ENCODE measurements at regions of chr4 and their contacts with region 1.

Region 1: GRCh38 chr4:139099366-139099982 is 77.5 kb downstream of the ELF2 start:
- DNase-seq: peak; percentile 50 to 90 (median 66)
- ATAC-seq: peak; percentile 88
- H3K4me3 ChIP-seq: no peak overlapping the region
- H3K4me3 Mint-ChIP-seq: no peak overlapping the region
- H3K27ac ChIP-seq: no peak overlapping the region
- H3K27ac Mint-ChIP-seq: no peak overlapping the region
- H3K4me1 ChIP-seq: no peaks in the 10 kb centered on the region
- H3K4me1 Mint-ChIP-seq: peaks cover 5% of the 10 kb centered on the region
- H3K27me3 ChIP-seq: no peaks in the 10 kb centered on the region
- H3K27me3 Mint-ChIP-seq: no peaks in the 10 kb centered on the region
- CTCF ChIP-seq: peak; percentile 89

Region 2: GRCh38 chr4:139083956-139084803 is 15.3 kb before region 1 on chr4:
- CTCF ChIA-PET with region 1: interaction called, 13 read pairs
- POLR2A ChIA-PET with region 1: no interaction called
- intact Hi-C with region 1: no loop called
- DNase-seq: peak; percentile 65 to 94 (median 80)
- ATAC-seq: peak; percentile 44
- H3K4me3 ChIP-seq: peak overlapping the region; percentile 93
- H3K4me3 Mint-ChIP-seq: peak overlapping the region; percentile 93
- H3K27ac ChIP-seq: peak overlapping the region; percentile 94 to 96
- H3K27ac Mint-ChIP-seq: peak overlapping the region; percentile 92
- H3K4me1 ChIP-seq: peaks cover 5% of the 10 kb centered on the region
- H3K4me1 Mint-ChIP-seq: peaks cover 55% of the 10 kb centered on the region
- H3K27me3 ChIP-seq: no peaks in the 10 kb centered on the region
- H3K27me3 Mint-ChIP-seq: no peaks in the 10 kb centered on the region
- CTCF ChIP-seq: no peak

Region 3: GRCh38 chr4:139177868-139178611 is 78.6 kb after region 1 on chr4:
- CTCF ChIA-PET with region 1: interaction called, 3 read pairs
- POLR2A ChIA-PET with region 1: interaction called, 3 read pairs
- intact Hi-C with region 1: loop called (anchors 5 kb)
- DNase-seq: peak; percentile 80 to 96 (median 90)
- ATAC-seq: peak; percentile 74
- H3K4me3 ChIP-seq: peak overlapping the region; percentile 85
- H3K4me3 Mint-ChIP-seq: peak overlapping the region; percentile 96
- H3K27ac ChIP-seq: peak overlapping the region; percentile 77 to 88
- H3K27ac Mint-ChIP-seq: peak overlapping the region; percentile 93
- H3K4me1 ChIP-seq: peaks cover 18% of the 10 kb centered on the region
- H3K4me1 Mint-ChIP-seq: peaks cover 26% of the 10 kb centered on the region
- H3K27me3 ChIP-seq: no peaks in the 10 kb centered on the region
- H3K27me3 Mint-ChIP-seq: no peaks in the 10 kb centered on the region
- CTCF ChIP-seq: no peak

Region 4: DNA sequence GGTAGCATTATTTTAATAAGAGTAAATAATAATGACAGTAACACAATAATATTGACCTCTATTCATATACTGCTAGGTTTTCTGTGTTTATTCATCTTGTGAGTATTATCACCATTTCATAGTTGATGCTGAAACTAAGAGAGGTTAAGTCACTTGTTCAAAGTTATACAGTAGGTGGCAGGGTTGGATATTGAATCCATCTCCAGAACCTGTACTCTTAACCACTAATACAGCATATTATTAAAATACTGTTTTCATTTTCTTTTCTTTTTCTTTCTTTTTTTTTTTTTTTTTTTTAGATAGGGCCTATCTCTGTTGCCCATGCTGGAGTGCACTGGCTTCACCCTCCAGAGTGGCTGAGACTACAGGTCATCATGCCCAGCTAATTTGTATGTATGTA is 84.7 kb after region 1 on chr4:
- CTCF ChIA-PET with region 1: no interaction called
- POLR2A ChIA-PET with region 1: no interaction called
- intact Hi-C with region 1: loop called (anchors 5 kb)
- DNase-seq: peak in 3 of 14 experiments; percentile 11 to 20 (median 17)
- ATAC-seq: no peak
- H3K4me3 ChIP-seq: no peak overlapping the region
- H3K4me3 Mint-ChIP-seq: no peak overlapping the region
- H3K27ac ChIP-seq: no peak overlapping the region
- H3K27ac Mint-ChIP-seq: no peak overlapping the region
- H3K4me1 ChIP-seq: peaks cover under 1% of the 10 kb centered on the region
- H3K4me1 Mint-ChIP-seq: no peaks in the 10 kb centered on the region
- H3K27me3 ChIP-seq: peaks cover 0 to 3% of the 10 kb centered on the region in 2 experiments
- H3K27me3 Mint-ChIP-seq: no peaks in the 10 kb centered on the region
- CTCF ChIP-seq: no peak

Region 5: DNA sequence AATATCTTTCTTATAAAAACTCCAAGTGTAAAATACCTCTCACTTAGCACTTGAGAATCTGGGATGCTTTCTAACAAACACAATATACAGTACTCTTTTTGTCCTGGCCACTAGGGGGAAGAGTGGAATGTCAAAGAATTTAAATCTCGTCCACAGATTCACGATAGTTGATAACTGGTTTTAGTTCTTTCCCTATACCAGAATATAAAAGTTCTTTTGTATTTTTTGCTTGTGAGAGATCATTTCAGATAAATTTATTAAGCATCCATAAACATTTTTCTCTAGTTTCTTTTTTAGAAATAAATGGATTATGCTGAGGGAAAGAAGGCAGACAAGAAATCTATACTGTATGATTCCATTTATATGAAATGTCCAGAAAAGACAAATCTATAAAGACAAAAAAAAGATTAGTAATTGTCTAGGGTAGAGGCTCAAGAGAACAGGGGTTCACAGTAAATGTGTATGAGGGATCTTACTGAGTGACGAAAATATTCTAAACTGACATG is 130.1 kb after region 1 on chr4:
- CTCF ChIA-PET with region 1: interaction called, 5 read pairs
- POLR2A ChIA-PET with region 1: interaction called, 3 read pairs
- intact Hi-C with region 1: loop called (anchors 1 to 2 kb)
- DNase-seq: peak in 4 of 14 experiments; percentile 17 to 71 (median 67)
- ATAC-seq: peak; percentile 71
- H3K4me3 ChIP-seq: no peak overlapping the region
- H3K4me3 Mint-ChIP-seq: no peak overlapping the region
- H3K27ac ChIP-seq: no peak overlapping the region
- H3K27ac Mint-ChIP-seq: no peak overlapping the region
- H3K4me1 ChIP-seq: no peaks in the 10 kb centered on the region
- H3K4me1 Mint-ChIP-seq: no peaks in the 10 kb centered on the region
- H3K27me3 ChIP-seq: no peaks in the 10 kb centered on the region
- H3K27me3 Mint-ChIP-seq: no peaks in the 10 kb centered on the region
- CTCF ChIP-seq: peak; percentile 82

Region 6: DNA sequence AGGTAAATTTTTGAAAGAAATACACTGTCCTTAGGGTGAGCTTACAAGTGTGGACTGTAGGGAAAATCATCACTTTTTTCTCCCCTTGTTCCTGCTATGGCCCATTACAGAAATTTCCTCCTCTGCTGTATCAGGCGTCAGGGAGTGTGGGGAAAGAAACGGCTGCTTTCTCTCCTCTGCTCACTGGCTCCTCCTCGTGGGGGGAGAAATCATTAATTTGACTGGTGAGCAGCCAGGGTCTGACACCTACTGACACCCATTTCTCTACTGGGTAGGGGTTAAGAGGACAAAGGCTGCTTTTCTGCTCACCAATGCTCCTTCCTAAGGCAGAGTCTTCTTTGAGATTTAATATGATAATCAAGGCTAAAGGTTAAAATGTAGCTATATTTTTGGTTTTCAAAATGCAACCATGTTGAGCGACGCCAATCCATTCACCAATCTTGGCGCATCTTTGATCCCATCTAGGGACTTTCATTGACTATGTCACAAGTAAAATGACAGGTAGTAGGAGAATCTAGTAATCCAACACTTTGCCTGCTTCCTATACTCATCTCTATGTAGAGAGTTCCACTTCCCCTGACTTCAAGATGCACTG is 431.5 kb after region 1 on chr4:
- CTCF ChIA-PET with region 1: no interaction called
- POLR2A ChIA-PET with region 1: no interaction called
- intact Hi-C with region 1: loop called in 1 of 2 experiments (anchors 10 kb)
- DNase-seq: peak; percentile 40 to 75 (median 53)
- ATAC-seq: peak; percentile 84
- H3K4me3 ChIP-seq: no peak overlapping the region
- H3K4me3 Mint-ChIP-seq: no peak overlapping the region
- H3K27ac ChIP-seq: no peak overlapping the region
- H3K27ac Mint-ChIP-seq: no peak overlapping the region
- H3K4me1 ChIP-seq: peaks cover 9% of the 10 kb centered on the region
- H3K4me1 Mint-ChIP-seq: peaks cover 5% of the 10 kb centered on the region
- H3K27me3 ChIP-seq: no peaks in the 10 kb centered on the region
- H3K27me3 Mint-ChIP-seq: no peaks in the 10 kb centered on the region
- CTCF ChIP-seq: peak; percentile 76

Region 7: DNA sequence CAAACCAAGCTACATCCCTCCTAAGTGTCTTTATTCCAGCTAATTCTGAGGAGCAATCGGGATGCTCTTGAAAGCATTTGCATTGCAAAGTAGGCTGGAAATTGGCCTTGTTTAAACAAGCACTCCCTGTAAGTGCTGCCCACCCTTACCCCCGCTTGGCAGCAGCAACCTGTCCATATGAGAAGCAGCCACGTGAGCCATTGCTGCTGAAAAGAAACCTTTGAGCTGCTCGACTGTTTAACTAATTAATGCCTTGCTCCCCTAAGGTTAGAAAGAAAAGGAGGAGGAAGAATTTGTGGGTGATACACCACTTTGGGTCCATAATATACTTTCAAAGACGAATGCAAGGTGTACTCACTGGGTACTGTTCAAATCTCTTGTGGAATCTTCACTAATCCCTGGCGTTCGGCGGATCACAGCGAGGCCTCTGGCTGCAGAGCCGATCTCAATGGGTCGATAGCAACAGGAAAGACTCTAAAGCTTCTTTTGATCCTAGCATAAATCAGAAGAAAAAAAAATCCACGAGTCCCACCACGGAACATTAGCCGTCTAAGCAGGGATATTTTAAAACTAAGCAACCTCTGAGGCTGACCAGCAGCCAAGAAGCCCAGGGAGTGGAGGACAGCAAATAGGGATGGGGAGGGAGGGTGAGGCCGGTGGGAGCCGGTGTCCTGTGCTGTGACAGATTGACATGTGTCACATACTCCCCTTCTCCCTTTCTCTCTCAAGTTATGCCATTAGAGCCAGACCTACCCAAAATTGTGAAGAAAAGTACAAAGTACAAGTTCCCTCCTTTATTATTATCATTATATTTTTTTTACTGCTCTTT is 528.9 kb after region 1 on chr4:
- CTCF ChIA-PET with region 1: no interaction called
- POLR2A ChIA-PET with region 1: no interaction called
- intact Hi-C with region 1: no loop called
- DNase-seq: no peak
- ATAC-seq: no peak
- H3K4me3 ChIP-seq: no peak overlapping the region
- H3K4me3 Mint-ChIP-seq: no peak overlapping the region
- H3K27ac ChIP-seq: no peak overlapping the region
- H3K27ac Mint-ChIP-seq: no peak overlapping the region
- H3K4me1 ChIP-seq: no peaks in the 10 kb centered on the region
- H3K4me1 Mint-ChIP-seq: no peaks in the 10 kb centered on the region
- H3K27me3 ChIP-seq: peaks cover 4 to 8% of the 10 kb centered on the region in 2 experiments
- H3K27me3 Mint-ChIP-seq: peaks cover 6% of the 10 kb centered on the region
- CTCF ChIP-seq: no peak

Region 8: DNA sequence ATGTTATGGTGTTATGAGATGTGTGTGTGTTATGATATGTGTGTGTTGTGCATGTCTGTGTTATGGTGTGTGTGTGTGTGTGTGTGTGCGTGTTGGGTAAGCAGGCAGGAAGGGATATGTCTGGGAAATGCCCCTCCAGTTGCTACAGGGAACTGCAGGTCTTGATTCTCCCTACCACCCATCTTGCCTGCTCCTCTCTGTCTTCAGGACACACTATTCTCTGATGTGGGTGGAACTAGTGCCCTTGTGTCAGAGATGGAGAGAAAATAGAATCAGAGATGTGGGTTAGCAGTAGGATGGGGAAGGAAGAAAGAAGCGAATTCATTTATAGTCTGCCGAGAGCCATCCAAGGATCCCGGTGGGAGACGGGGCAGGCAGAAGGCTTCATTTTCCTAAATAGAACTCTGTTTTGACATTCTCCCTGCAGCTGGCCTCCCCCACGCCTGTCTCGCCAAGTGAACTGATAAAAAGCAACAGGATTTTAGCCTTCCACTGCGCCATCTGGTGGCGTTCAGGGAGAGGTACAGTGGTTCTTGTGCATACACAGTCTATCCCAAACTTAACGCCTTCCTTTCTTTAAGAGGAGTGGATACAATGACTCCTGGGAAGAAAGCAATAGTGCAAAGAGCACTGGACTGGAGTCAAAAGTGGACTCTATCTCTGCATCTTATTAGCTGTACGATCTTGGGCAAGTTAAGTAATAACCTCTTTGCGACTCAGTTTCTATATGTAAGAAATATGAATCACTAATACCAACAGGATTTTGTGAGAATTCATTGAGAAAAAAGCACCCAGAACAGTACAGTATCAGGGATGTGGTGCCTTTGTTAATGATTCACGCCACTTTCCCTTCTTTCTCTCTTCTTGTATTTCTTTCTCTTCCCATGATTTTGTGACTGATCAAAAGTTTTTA is 552.1 kb after region 1 on chr4:
- CTCF ChIA-PET with region 1: no interaction called
- POLR2A ChIA-PET with region 1: no interaction called
- intact Hi-C with region 1: loop called (anchors 1 to 5 kb)
- DNase-seq: peak; percentile 52 to 87 (median 59)
- ATAC-seq: peak; percentile 92
- H3K4me3 ChIP-seq: no peak overlapping the region
- H3K4me3 Mint-ChIP-seq: no peak overlapping the region
- H3K27ac ChIP-seq: no peak overlapping the region
- H3K27ac Mint-ChIP-seq: no peak overlapping the region
- H3K4me1 ChIP-seq: peaks cover 5% of the 10 kb centered on the region
- H3K4me1 Mint-ChIP-seq: peaks cover 6% of the 10 kb centered on the region
- H3K27me3 ChIP-seq: peaks cover 0 to 5% of the 10 kb centered on the region in 2 experiments
- H3K27me3 Mint-ChIP-seq: peaks cover 4% of the 10 kb centered on the region
- CTCF ChIP-seq: peak; percentile 95